ENCODE measurements at regions of chr3 and their contacts with region 1.

Region 1: GRCh38 chr3:122679085-122679881 is 1.4 kb upstream of the PARP14 start:
- ATAC-seq: peak; percentile 52 to 80 (median 70)
- H3K4me3 ChIP-seq: no peak overlapping the region
- H3K27ac ChIP-seq: no peak overlapping the region
- H3K4me1 ChIP-seq: peaks cover 0 to 5% of the 10 kb centered on the region in 2 donors

Region 2: DNA sequence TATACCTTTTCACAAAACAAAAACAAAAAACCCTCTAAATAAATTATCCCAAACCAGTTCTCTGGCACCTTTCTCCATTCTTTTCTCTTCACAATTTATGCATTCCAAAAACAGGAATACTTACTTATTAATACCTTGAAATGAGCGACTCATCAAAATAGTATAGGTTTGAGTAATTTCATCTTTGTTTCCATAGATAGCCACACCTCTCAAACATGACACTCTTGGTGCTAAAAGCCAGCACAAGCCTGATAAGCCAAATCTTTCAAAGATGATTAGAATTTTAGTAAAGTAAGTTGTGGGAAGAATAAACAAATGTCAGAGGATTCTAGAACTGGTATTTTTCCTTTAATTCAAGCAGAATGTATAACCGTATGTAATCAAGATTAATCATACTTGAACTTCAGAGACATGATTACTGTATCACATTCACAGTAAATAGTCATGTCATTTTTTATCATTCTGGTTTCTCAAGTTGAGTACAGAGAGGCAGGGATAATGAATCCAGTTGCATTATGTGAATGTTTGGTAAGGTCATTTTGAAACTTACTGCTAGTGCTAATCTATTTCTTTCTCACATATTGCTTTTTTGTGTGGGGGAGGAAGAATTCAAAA is 251.3 kb before region 1 on chr3:
- in situ Hi-C with region 1: loop called in 2 of 9 experiments (anchors 25 kb)
- ATAC-seq: peak in 1 of 8 experiments; percentile 38
- H3K4me3 ChIP-seq: no peak overlapping the region
- H3K27ac ChIP-seq: no peak overlapping the region
- H3K4me1 ChIP-seq: no peaks in the 10 kb centered on the region

Region 3: GRCh38 chr3:122510878-122511535 is 168.3 kb before region 1 on chr3:
- in situ Hi-C with region 1: no loop called
- ATAC-seq: no peak
- H3K4me3 ChIP-seq: no peak overlapping the region
- H3K27ac ChIP-seq: no peak overlapping the region
- H3K4me1 ChIP-seq: peaks cover 6 to 15% of the 10 kb centered on the region in 2 donors

Region 4: DNA sequence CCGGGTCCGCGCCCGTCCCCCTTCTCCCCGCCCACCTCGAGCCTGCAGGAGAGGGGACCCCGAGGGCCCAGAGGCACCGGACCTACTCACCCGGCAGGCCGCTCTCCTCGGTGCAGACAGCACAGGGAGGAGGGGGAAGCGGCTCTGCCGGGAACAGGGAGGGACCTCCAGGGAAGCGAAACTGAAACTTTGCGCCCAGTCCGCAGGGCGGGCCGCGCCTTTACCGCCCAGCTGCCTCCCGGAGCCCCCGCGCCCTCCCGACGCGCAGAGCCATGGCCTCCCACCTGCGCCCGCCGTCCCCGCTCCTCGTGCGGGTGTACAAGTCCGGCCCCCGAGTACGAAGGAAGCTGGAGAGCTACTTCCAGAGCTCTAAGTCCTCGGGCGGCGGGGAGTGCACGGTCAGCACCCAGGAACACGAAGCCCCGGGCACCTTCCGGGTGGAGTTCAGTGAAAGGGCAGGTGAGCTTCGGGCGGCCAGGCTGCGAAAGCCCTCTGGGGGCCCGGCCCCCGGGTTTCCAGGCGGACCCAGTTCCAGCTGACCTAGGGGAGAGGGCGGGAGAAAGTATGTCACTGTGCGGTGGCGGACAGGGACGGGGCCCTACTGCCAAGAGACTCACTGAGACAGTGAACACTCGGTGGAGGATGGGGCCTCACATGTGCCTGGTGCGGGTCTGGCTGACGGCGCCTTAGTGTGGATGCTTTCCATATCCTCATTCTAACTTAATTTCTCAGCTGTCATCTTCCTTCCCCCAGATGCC is 114.9 kb before region 1 on chr3 and contains the starts of genes DTX3L and PARP9:
- in situ Hi-C with region 1: loop called in 1 of 9 experiments (anchors 10 kb)
- ATAC-seq: peak; percentile 90 to 96 (median 93)
- H3K4me3 ChIP-seq: peak within 1 kb of the TSS; percentile 9 to 44 (median 34)
- H3K27ac ChIP-seq: peak within 1 kb of the TSS in 1 of 2 donors; percentile 64
- H3K4me1 ChIP-seq: peaks cover 0 to 6% of the 10 kb centered on the region in 2 donors
- total RNA-seq, gene DTX3L: 0.11 to 51.3 (median 7.2) TPM
- total RNA-seq, gene PARP9: 0.33 to 139 (median 9.8) TPM